BJ (cell line): ENCODE measurements at regions of chr1 and their contacts with region 1.

Region 1: DNA sequence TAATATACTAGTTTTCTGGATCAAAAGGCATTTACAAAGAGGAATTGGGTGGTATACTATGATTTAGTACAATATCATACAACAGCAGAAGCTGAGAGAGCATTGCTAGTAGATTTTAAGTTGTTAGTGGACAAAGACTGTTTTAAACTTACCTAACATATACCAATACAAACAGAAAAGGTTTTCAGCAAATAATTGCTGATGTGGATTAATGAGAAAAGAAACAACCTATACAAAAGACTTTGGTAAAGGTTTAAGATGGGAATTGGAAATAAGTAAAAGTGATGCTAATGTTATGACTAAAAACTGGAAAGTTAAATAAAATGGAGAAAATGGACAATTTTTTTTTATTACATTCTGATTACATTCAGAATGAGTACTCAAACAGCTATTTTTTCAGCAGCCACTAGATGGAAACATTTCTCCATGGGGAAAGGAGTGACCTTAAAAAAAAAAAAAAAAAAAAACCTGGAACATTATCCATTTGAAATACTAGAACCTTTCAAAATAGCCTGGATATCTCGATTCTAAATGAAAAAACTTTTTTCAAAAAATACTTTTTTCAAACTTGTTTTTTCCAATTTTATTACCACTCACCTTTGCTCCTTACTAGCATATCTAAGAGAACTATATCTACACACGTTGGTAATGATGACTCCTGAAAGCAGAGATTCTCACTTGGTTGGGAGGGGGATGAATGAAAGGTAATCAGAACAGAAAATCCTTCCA is 55.4 kb downstream of the EPRS1 start:
- DNase-seq: no peak
- H3K4me3 ChIP-seq: no peak overlapping the region
- H3K27me3 ChIP-seq: no peaks in the 10 kb centered on the region
- CTCF ChIP-seq: peak; percentile 63

Region 2: GRCh38 chr1:219744652-219745469 is 246.1 kb before region 1 on chr1:
- CTCF ChIA-PET with region 1: no interaction called
- POLR2A ChIA-PET with region 1: interaction called, 11 read pairs
- DNase-seq: no peak
- H3K4me3 ChIP-seq: no peak overlapping the region
- H3K27me3 ChIP-seq: no peaks in the 10 kb centered on the region
- CTCF ChIP-seq: no peak

Region 3: DNA sequence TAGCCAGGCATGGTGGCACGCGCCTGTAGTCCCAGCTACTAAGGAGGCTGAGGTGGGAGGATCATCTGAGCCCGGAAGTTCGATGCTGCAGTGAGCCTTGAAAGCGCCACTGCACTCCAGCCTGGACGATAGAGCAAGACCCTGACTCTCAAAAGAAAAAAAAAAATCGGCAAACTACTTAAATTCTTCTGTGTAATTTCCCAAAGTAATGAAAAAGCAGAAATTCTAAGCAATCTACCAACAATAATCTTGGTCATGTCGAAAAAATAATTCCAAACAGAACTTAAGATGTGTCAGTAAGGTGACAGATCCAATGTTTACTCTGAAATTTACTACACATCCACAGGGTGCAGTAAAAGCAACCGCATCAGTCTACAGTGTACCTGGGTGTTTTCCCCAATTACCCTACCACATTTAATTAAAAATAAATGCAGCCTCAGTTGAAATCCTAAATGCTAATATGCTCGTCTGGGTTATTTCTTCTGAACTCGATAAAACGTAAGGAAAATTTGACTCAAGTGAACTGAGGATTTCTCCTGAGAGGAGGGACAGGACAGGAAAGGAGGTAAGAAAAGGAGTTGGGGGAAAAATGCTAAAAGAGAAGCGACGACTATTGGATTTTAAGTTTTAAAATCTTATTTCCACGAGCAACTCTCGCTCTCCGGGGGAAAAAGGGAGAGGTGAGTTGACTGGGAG is 54.6 kb after region 1 on chr1:
- CTCF ChIA-PET with region 1: no interaction called
- POLR2A ChIA-PET with region 1: no interaction called
- DNase-seq: no peak
- H3K4me3 ChIP-seq: peak overlapping the region; percentile 99
- H3K27me3 ChIP-seq: no peaks in the 10 kb centered on the region
- CTCF ChIP-seq: no peak